HEK293 (cell line): ENCODE measurements at regions of chr4 and their contacts with region 1.

Region 1: DNA sequence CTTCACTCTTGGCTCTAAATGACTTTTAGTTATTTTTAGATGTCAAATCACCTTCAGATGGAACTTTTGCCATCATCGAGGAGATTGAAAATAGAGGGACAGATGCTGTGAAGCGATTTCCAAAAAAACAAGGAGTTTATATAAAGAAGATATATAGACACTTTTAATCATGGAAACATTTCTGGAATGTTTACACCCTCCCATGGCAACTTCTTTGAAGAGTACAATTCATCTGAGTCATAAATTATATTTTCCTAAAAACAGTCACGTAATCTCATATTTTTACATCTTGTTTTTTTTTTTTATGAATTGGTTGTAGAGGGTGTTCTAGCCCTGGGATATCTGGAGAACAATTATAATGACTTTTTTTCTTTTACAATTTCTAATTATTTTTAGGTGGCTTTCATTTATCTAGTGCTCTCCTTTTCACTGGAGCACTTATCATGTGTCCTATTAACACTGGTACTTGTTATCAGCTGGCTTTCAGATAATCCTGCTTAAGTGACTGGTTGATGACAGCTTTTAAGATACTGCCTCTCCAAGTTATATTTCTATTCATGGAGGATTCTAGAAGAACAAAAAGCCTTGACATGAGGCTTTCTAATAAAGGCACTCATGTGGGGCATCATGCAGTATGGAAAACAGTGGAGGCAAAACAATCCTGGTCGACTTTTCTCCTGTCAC is 24.9 kb downstream of the PCDH7 start:
- H3K4me3 ChIP-seq: no peak overlapping the region
- H3K27ac ChIP-seq: no peak overlapping the region
- H3K4me1 ChIP-seq: 0 out of 2 replicates have a peak, but pooled peaks cover 3% of the 10 kb centered on the region
- CTCF ChIP-seq: no peak

Region 2: DNA sequence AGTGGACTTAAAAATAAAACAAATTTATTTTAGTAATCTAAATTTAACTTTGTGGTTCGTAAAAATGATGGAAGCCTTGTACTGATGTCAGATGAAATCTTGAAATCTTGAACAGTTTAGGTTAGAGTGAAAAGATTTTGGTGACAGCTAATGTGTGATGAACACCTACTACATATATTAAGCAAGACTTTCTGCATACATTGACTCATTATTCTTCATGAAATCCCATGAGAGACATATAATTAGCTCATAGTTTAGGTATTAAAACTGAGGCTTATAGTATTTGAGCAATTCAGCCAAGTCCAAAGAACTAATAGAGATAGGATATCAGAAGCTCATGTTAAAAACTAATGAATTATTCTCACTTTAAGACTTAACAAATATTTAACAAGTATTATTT is 91.8 kb before region 1 on chr4:
- CTCF ChIA-PET with region 1: no interaction called
- POLR2A ChIA-PET with region 1: no interaction called
- H3K4me3 ChIP-seq: no peak overlapping the region
- H3K27ac ChIP-seq: no peak overlapping the region
- H3K4me1 ChIP-seq: no peaks in the 10 kb centered on the region
- CTCF ChIP-seq: no peak

Region 3: GRCh38 chr4:30719460-30720020 is 25.6 kb before region 1 on chr4:
- CTCF ChIA-PET with region 1: no interaction called
- POLR2A ChIA-PET with region 1: interaction called, 11 read pairs
- H3K4me3 ChIP-seq: peak overlapping the region; percentile 86
- H3K27ac ChIP-seq: peak overlapping the region; percentile 98
- H3K4me1 ChIP-seq: no peaks in the 10 kb centered on the region
- CTCF ChIP-seq: 0 out of 2 replicates have a peak, but pooled peaks have one; percentile 17

Region 4: GRCh38 chr4:30839583-30840520 is 94.8 kb after region 1 on chr4:
- CTCF ChIA-PET with region 1: no interaction called
- POLR2A ChIA-PET with region 1: no interaction called
- H3K4me3 ChIP-seq: no peak overlapping the region
- H3K27ac ChIP-seq: no peak overlapping the region; the same call in 1 of the 2 replicates
- H3K4me1 ChIP-seq: peaks cover 33% of the 10 kb centered on the region
- CTCF ChIP-seq: no peak